ENCODE measurements at regions of chr16 and their contacts with region 1.

Region 1: DNA sequence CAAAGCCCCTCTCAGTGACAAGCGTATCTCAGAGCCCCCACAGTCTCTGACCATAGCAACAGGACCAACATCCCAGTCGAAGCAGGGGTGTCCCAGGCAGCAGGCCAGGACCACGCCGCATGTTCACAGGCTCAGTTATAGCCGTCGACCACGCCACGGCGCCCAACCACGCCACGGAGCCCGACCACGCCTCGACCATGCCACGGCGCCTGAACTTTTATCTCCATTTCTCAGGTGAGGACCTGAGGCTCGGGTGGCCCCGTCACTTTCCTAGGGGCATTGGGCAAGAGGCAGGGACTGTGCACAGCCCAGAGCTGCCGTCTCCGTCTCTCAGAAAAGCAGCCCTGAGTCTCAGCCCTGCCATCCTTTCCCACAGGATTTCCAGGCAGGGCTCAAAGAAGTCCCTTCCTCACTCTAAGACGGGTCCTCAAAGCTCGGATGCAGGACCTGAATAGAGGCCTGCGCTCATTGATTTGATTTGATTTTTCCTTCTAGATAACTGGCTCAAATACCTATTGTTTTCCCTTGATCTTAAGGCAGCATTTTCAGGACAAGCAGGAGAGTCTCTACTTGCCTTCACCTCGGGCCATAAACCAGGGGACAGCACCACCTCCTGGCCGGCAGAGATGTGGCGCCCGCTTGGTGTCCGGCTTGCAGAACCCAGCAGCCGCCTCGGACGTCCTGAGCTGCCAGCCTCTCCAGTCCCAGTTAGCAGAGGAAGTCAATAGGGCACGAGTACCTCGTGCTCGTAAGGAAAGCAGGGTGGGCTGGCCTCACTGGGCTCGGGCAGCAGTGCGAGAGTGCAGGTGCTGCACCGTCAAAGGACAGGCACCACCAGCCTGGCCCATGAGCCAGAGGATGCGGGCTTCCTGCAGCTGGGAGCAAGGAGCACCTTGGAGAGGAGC is 38.7 kb downstream of the C16orf95 start:
- H3K4me3 ChIP-seq: no peak overlapping the region
- H3K27ac ChIP-seq: no peak overlapping the region
- H3K4me1 ChIP-seq: no peaks in the 10 kb centered on the region; the same call in 1 of the 2 replicates
- CTCF ChIP-seq: peak; percentile 88

Region 2: DNA sequence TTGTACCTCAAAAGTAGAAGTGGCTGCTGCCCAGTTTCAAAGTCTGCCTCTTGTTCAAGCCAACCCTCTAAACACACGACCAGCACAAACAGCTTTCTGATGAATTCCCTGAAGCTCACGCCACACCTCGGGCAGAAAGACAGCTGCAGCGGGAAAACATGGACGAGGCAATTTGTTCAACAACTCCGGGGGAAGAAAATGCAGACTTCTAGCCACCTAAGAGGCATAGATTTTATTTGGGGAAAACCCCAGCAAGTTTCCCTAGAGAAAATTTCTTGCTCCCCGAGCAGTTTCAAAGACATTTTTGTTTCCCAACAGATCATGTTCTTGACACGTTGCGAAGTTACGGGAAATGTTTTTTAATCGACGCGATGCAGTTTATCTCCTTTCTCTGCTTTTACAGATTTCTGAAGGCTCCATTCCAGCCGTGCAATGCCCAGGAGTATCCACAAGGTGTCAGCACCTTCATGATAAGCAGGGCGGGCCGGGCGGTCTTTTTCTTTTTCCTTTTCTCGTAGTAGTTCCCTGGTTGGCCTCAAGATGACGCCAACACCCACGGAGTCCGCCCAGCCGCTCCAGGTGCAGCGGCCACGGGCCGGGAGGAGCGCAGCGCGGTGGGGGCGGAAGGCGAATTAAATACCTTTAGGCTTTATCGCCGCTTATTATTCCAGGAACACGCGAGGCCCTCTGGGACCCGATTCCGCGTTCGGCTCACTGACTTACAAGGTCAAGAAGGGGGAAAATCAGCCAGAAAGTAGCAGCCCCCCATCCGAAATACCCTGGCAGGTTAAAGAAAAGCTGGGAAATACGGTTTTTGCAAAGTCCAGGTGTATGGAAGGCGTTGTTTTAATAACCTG is 714.7 kb before region 1 on chr16:
- CTCF ChIA-PET with region 1: interaction called, 48 read pairs
- POLR2A ChIA-PET with region 1: no interaction called
- H3K4me3 ChIP-seq: 0 out of 2 replicates have a peak overlapping the region, but pooled peaks have one; percentile 1
- H3K27ac ChIP-seq: no peak overlapping the region
- H3K4me1 ChIP-seq: no peaks in the 10 kb centered on the region
- CTCF ChIP-seq: peak; percentile 98

Region 3: GRCh38 chr16:87203060-87203656 is 75.3 kb before region 1 on chr16:
- CTCF ChIA-PET with region 1: interaction called, 21 read pairs
- POLR2A ChIA-PET with region 1: no interaction called
- H3K4me3 ChIP-seq: no peak overlapping the region
- H3K27ac ChIP-seq: no peak overlapping the region
- H3K4me1 ChIP-seq: no peaks in the 10 kb centered on the region
- CTCF ChIP-seq: peak; percentile 90

Region 4: DNA sequence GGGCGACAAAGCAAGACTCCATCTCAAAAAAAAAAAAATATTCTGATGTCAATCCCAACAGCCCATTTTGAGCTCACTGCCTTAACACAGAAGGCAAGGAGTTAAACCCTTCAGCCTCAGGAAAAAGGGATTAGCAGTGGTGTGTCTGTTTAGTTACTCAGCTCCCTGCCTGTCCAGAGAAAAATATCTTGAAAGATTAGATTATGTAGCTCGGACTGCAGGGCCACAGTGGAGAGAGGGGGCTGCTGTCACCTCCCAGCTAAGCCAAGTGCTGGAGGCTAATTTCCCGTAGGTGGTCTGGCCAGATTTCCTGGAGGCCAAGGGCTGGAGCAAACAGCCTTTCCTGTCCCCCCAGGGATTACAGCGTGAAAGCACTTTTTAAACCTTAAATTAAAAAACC is 11.6 kb before region 1 on chr16:
- CTCF ChIA-PET with region 1: interaction called, 23 read pairs
- POLR2A ChIA-PET with region 1: no interaction called
- H3K4me3 ChIP-seq: no peak overlapping the region
- H3K27ac ChIP-seq: no peak overlapping the region
- H3K4me1 ChIP-seq: peaks cover 6% of the 10 kb centered on the region; the same call in 1 of the 2 replicates
- CTCF ChIP-seq: no peak

Region 5: DNA sequence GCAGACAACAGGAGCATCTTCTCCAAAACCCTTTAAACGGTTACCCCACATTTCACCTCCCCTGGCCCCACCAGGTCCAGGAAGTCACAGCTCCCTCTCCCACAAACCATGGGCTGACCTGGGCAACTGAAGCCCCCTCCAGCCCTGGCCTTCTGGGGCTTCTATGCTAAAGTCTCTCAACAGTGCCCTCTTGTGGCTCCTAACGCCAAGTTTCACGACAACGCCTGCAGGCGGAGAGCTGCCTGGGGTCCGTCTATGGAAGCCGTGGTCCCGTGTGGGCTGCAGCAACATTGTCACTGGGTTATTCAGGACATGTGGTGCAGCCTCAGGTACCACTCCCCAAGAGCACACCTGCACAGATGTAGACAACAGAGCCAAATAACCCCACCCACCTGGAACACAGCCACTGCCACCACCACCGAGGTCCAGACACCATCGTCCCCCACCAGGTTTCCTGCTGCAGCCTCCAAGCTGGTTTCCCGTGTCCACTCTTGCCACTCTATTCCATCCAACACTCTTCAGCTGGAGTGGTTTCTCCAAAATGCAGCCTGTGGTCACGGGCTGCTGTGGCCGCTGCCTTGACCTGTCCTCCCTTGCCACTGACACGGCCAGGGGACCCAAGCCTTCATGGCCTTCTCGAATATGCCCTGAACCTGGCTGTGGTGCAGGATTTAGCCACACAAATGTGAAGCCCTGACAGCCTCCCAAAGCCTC is 19.6 kb after region 1 on chr16:
- CTCF ChIA-PET with region 1: interaction called, 20 read pairs
- POLR2A ChIA-PET with region 1: no interaction called
- H3K4me3 ChIP-seq: no peak overlapping the region
- H3K27ac ChIP-seq: no peak overlapping the region
- H3K4me1 ChIP-seq: no peaks in the 10 kb centered on the region
- CTCF ChIP-seq: 0 out of 2 replicates have a peak, but pooled peaks have one; percentile 29

Region 6: GRCh38 chr16:87461466-87461991 is 183.1 kb after region 1 on chr16:
- CTCF ChIA-PET with region 1: no interaction called
- POLR2A ChIA-PET with region 1: no interaction called
- H3K4me3 ChIP-seq: peak overlapping the region; percentile 16; the same call in 1 of the 2 replicates
- H3K27ac ChIP-seq: no peak overlapping the region
- H3K4me1 ChIP-seq: peaks cover 29% of the 10 kb centered on the region
- CTCF ChIP-seq: 0 out of 2 replicates have a peak, but pooled peaks have one; percentile 48